Left colon (tissue), 2 donors: ENCODE measurements at regions of chr17 and their contacts with region 1.

Region 1: DNA sequence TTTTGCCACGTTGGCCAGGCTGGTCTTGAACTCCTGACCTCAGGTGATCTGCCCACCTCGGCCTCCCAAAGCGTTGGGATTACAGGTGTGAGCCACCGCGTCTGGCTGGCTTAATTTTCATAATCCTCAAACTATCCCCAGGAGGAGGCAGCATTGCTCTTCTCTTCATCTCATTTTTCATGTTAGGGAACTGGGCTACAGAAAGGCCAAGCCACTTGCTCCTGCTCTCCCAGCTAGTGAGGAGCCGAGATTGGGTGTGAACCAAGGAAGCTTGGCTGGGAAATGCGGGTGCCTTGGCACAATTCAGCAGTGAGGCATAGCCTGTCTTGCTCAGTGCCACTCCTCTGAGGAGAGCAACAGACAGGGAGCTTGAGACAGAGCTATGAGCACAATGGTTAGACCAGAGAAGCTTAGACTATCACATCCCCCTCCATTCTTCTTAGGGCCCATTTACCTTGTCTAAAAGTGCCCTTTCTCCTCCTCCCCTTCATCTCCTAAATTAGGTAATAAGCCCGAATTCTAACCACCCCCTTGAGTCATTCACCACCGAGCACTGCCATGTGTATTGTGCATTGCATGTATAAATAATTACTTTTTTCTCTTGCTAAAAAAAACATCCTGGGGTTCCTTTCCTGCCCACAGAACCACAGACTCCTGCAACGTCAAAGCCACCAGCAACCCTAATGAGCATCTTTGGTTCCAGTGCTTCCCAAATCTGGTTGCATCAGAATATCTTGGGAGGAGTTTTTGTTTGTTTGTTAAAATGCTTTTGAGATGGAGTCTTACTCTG is 20.0 kb upstream of the KIF19 start:
- DNase-seq: no peak
- ATAC-seq: no peak

Region 2: DNA sequence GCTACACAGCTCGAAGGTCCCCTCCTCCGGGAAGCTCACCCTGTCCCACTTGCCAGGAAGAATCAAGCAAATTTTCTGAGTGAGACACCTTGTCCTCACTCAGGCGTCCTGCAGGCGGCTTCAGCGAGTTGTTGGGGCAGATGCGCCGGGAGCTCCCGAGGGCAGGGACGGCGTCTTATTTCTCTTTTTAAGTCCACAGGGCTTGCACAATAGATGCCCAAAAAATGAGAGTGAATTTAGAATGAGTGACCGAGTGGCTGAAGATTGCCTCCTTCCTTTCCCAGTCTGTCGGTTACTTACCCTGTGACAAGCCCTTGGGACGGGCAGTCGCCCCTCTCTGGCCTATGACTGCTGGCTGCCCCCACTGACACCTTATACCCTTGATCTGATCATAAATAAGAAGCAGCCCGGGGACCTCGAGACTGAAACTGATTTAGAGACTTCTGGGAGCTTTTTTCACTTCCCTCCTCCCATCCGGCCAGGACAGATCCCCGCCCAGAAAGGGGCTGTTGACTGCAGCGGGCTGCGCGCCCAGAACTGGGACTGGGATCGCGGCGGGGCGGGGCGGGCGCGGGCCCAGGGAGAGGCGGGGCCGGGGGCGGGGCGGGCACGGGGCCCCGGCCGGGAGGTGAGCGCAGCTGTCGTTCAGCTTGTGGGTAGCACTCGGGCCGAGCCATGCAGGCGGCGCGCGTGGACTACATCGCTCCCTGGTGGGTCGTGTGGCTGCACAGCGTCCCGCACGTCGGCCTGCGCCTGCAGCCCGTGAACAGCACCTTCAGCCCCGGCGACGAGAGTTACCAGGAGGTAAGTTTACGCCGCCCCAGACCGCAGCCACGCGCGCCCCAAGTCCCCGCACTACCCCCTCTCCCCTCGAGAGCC is 92.9 kb before region 1 on chr17 and contains the start of gene TTYH2:
- intact Hi-C with region 1: no loop called
- DNase-seq: peak; percentile 85 to 91
- ATAC-seq: peak; percentile 88
- total RNA-seq, gene TTYH2: 1.4 to 3.0 TPM

Region 3: GRCh38 chr17:74249590-74250270 is 56.3 kb before region 1 on chr17:
- intact Hi-C with region 1: no loop called
- DNase-seq: no peak
- ATAC-seq: no peak

Region 4: GRCh38 chr17:74354123-74354522 is 48.1 kb after region 1 on chr17:
- intact Hi-C with region 1: loop called in 1 of 2 experiments (anchors 10 kb)
- DNase-seq: peak; percentile 43 to 74
- ATAC-seq: peak; percentile 84

Region 5: DNA sequence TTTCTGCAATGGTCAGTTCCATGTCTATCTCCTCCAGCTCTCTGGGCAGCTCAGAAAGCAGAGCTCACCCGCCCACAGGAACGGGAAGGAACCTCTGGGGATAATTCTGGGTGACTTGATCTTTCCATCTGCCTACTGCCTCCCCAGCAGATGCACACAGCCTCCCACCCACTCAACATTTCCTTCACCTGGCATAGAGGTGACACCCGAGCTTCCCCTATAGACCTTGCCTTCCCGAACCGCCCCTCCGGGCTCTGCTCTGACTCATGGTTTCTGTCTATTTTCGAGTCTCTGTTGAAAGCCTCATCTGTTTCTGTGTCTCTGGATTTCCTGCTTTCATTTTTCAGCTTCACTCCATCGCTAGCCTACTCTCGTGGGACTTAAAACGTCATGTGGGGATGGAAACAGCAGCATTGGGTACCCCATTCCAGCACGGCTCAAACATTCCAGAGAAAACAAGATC is 944.0 kb after region 1 on chr17:
- intact Hi-C with region 1: no loop called
- DNase-seq: no peak
- ATAC-seq: peak; percentile 22